GM12878 (cell line): ENCODE measurements at regions of chr11 and their contacts with region 1.

Region 1: DNA sequence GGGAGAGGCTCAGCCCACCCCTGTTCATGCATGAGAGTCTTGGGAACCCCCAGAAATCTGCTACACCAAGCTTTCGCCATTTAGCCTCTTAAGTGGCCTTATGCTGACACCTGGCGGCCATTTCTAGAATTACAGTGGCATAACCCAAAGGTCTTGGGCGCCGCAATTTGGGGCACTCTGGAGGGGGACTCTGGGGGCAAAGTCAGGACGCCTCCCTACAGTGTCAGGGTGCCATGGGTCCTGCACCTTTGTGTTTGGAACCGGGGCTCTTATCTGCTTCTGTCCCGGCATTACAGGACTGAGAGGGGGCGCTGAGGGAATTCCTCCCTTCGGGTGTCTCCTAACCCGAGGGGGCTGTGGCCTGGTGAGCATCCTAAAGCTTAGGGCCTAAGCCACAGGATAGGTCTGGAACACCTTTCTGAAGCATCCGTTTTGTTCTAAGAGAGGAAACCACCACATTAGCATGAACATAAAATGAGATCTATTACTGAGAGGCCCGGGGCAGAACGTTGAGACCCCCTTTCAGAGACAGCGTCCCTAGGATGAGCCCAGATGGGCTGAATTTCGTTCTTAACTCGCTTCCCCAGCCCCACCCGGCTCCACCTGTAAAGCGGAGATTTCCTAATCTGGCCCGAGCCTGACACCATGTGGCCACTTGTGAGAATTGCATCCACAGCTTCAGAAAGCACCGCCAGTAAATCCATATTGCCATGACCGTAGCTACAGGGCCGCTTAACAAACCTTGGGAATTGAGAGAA is 9.3 kb downstream of the INS start:
- DNase-seq: no peak
- ATAC-seq: peak; percentile 77
- H3K4me3 ChIP-seq: no peak overlapping the region
- H3K27ac ChIP-seq: no peak overlapping the region
- H3K4me1 ChIP-seq: no peaks in the 10 kb centered on the region
- H3K27me3 ChIP-seq: no peaks in the 10 kb centered on the region; a peak in 1 of 4 replicates
- CTCF ChIP-seq: peak; percentile 73 to 82 (median 73)
- EP300 ChIP-seq: no peak
- POLR2A ChIP-seq: no peak
- RAD21 ChIP-seq: peak; percentile 80

Region 2: DNA sequence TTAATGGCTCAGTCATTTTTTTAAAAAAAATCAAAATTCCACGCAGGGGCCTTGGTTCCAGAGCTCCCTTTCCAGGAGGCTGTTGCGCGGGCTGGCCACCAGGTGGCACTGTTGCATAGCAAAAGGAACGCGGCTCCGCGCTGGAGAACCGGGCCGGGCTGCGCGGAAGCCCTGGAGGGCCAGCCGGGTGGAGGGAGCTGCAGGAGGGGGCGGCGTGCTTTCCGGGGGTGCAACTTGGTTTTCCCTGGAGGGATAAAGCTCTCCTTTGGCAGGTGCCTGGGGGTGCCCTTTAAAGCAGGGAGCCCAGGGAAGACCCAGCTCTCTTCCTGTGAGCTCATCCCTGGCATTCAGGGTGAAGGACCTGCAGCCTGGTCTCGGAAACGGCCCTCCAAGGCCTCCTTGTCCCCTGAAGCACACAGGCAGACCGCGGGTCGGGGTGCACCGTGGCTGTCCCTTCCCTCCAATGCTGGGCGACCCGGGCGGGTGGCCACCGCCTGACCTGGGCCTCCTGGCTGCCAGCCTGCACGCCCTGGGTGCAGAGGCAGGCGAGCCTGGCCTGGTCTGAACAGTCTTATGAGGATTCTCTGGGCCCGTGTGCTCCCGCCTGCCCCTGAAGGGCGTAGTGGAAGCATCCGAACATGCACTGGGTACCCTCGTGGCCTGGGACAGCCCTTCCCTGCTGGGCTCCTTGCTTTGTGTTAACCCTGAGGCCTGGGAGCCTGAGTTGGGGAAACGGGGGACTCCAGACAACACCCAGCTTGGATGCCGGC is 498.7 kb before region 1 on chr11:
- CTCF ChIA-PET with region 1: interaction called, 20 read pairs
- POLR2A ChIA-PET with region 1: no interaction called
- RAD21 ChIA-PET with region 1: interaction called, 11 read pairs
- SMC1A ChIA-PET with region 1: interaction called, 9 read pairs
- in situ Hi-C with region 1: no loop called
- intact Hi-C with region 1: loop called (anchors 1 kb)
- DNase-seq: no peak
- ATAC-seq: peak; percentile 97
- H3K4me3 ChIP-seq: no peak overlapping the region
- H3K27ac ChIP-seq: no peak overlapping the region
- H3K4me1 ChIP-seq: no peaks in the 10 kb centered on the region
- H3K27me3 ChIP-seq: peaks cover 0 to 3% of the 10 kb centered on the region in 2 experiments; a peak in 2 of 4 replicates
- CTCF ChIP-seq: peak; percentile 90 to 94 (median 91)
- EP300 ChIP-seq: no peak
- POLR2A ChIP-seq: no peak
- RAD21 ChIP-seq: peak; percentile 83

Region 3: DNA sequence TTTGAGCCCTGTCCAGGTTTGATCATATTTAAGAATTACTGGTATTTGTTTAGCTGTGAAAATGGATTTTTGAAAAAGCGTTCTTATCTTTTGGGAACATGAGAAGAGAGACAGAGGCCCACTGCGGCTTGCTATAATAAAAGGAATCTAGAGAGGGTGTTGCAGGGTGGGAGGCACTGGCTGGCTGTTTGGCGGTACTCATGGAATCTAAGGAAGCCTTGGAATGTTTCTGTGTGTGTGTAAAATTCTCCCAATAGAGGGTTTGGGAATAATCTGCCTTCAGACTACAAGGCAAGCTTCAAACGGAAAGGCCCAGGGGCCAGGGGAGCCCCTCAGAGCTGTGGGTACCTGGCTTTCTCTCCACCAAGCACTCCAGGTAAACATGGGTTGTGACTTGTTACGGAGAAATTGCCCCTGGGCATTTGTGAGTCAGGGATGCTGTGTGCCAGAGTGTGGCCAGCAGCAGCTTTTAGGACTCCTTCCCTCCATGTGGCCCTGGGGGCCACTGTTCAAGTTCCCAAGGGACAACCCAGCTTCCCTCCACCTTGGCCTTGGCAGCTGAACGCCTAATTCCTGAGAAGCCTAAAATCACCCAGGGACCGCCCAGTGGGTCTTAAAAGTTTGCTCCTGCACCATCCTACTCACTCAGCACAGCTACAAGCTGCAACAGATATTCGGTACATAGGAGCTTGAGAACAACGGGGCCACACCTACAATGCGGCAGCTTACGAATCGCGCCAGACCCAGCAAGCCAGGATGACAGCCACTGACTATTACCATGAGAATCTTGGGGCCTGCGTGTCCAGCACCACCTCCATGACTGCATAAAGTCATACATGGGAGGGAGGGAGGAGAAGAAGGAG is 331.0 kb before region 1 on chr11:
- CTCF ChIA-PET with region 1: interaction called, 6 read pairs
- POLR2A ChIA-PET with region 1: no interaction called
- RAD21 ChIA-PET with region 1: no interaction called
- SMC1A ChIA-PET with region 1: no interaction called
- in situ Hi-C with region 1: loop called (anchors 5 kb)
- intact Hi-C with region 1: no loop called
- DNase-seq: no peak
- ATAC-seq: no peak
- H3K4me3 ChIP-seq: no peak overlapping the region
- H3K27ac ChIP-seq: no peak overlapping the region
- H3K4me1 ChIP-seq: no peaks in the 10 kb centered on the region
- H3K27me3 ChIP-seq: peaks cover 0 to 2% of the 10 kb centered on the region in 2 experiments; a peak in 2 of 4 replicates
- CTCF ChIP-seq: no peak
- EP300 ChIP-seq: no peak
- POLR2A ChIP-seq: no peak
- RAD21 ChIP-seq: no peak

Region 4: DNA sequence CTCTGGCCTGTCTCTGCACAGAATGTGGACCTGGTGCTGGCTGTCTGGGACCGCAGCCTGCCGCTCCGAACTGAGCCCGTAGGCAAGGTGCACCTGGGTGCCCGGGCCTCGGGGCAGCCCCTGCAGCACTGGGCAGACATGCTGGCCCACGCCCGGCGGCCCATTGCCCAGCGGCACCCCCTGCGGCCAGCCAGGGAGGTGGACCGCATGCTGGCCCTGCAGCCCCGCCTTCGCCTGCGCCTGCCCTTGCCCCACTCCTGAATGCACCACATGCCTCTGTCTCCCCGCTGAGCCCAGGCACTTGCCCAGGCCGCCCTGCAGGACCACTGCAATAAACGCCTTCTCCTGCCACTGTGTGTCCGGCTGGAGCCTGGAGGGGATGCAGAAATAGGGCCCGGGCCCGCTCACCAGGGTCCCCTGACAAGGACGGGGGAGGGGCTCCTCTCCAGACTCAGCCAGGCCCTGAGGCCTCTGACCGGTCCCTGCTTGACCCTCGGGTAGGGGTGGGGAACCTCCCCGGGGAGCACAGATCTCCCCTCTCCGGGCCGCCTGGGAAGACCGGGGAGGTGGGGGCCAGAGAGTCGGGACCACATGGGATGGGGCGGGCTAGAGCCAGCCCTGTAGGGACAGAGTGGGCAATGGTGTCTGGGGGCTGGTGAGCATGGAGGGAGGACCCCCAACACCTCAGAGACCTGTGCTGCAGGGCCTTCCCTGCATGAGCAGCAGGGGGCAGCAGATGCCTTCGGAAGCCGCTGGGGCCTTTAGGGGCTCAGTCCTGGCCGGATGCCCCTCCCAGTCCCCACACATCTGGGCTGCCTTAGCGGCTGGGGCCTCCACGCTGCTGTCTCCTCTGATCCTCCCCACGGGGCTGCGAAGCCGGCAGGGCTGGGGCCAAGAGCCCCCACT is 314.3 kb before region 1 on chr11:
- CTCF ChIA-PET with region 1: interaction called, 35 read pairs
- POLR2A ChIA-PET with region 1: no interaction called
- RAD21 ChIA-PET with region 1: interaction called, 7 read pairs
- SMC1A ChIA-PET with region 1: interaction called, 8 read pairs
- in situ Hi-C with region 1: no loop called
- intact Hi-C with region 1: loop called (anchors 1 kb)
- DNase-seq: no peak
- ATAC-seq: peak; percentile 89
- H3K4me3 ChIP-seq: no peak overlapping the region; the same call in 1 of the 2 replicates
- H3K27ac ChIP-seq: no peak overlapping the region
- H3K4me1 ChIP-seq: peaks cover 15% of the 10 kb centered on the region
- H3K27me3 ChIP-seq: no peaks in the 10 kb centered on the region; a peak in 1 of 4 replicates
- CTCF ChIP-seq: peak; percentile 91 to 96 (median 94)
- EP300 ChIP-seq: no peak
- POLR2A ChIP-seq: no peak
- RAD21 ChIP-seq: peak; percentile 96

Region 5: GRCh38 chr11:1872267-1872985 is 279.3 kb before region 1 on chr11:
- CTCF ChIA-PET with region 1: no interaction called
- POLR2A ChIA-PET with region 1: no interaction called
- RAD21 ChIA-PET with region 1: no interaction called
- SMC1A ChIA-PET with region 1: no interaction called
- in situ Hi-C with region 1: no loop called
- intact Hi-C with region 1: no loop called
- DNase-seq: no peak
- ATAC-seq: no peak
- H3K4me3 ChIP-seq: no peak overlapping the region
- H3K27ac ChIP-seq: no peak overlapping the region
- H3K4me1 ChIP-seq: no peaks in the 10 kb centered on the region
- H3K27me3 ChIP-seq: no peaks in the 10 kb centered on the region
- CTCF ChIP-seq: no peak
- EP300 ChIP-seq: no peak
- POLR2A ChIP-seq: no peak
- RAD21 ChIP-seq: no peak

Region 6: GRCh38 chr11:1882519-1883238 is 269.0 kb before region 1 on chr11:
- CTCF ChIA-PET with region 1: interaction called, 8 read pairs
- POLR2A ChIA-PET with region 1: no interaction called
- RAD21 ChIA-PET with region 1: interaction called, 9 read pairs
- SMC1A ChIA-PET with region 1: no interaction called
- in situ Hi-C with region 1: no loop called
- intact Hi-C with region 1: loop called (anchors 2 kb)
- DNase-seq: no peak
- ATAC-seq: peak; percentile 96
- H3K4me3 ChIP-seq: no peak overlapping the region
- H3K27ac ChIP-seq: no peak overlapping the region
- H3K4me1 ChIP-seq: no peaks in the 10 kb centered on the region; the same call in 1 of the 2 replicates
- H3K27me3 ChIP-seq: no peaks in the 10 kb centered on the region
- CTCF ChIP-seq: peak; percentile 84 to 93 (median 92)
- EP300 ChIP-seq: no peak
- POLR2A ChIP-seq: peak; percentile 45; the same call in 1 of the 2 replicates
- RAD21 ChIP-seq: peak; percentile 68

Region 7: DNA sequence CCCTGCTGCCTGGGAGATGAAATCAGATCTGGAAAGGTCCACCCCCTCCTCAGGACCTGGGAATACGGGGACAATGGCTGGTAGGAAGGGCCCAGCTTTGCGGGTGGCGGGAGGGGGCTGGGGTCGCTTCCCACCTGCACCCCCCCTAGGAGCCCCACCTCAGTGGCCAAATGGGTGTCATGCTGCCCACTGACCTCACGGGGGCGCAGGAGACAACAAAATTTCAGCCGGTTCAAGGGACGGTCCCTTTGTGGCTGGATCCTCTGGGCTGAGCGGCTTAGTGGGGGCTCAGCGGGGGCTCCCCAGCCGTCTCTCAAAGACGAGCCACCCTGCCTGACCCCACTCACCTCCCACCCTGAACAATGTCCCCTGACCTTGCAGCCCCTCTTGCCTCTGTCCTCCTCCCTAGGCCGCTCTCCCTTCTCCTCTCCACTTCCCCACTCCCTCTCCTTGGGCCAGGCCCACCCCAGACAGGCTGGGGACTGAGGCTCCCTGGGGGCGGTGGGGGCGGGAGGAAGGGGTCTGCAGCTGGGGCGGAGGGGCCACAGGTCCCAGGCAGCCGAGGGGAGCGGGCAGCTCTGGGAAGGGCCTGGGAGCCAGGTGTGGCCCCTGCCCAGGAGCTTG is 114.7 kb before region 1 on chr11:
- CTCF ChIA-PET with region 1: interaction called, 180 read pairs
- POLR2A ChIA-PET with region 1: no interaction called
- RAD21 ChIA-PET with region 1: interaction called, 101 read pairs
- SMC1A ChIA-PET with region 1: interaction called, 46 read pairs
- in situ Hi-C with region 1: no loop called
- intact Hi-C with region 1: no loop called
- DNase-seq: no peak
- ATAC-seq: peak; percentile 80
- H3K4me3 ChIP-seq: no peak overlapping the region
- H3K27ac ChIP-seq: no peak overlapping the region
- H3K4me1 ChIP-seq: no peaks in the 10 kb centered on the region
- H3K27me3 ChIP-seq: no peaks in the 10 kb centered on the region
- CTCF ChIP-seq: no peak
- EP300 ChIP-seq: no peak
- POLR2A ChIP-seq: no peak
- RAD21 ChIP-seq: no peak

Region 8: GRCh38 chr11:2240834-2241233 is 89.2 kb after region 1 on chr11:
- CTCF ChIA-PET with region 1: no interaction called
- POLR2A ChIA-PET with region 1: no interaction called
- RAD21 ChIA-PET with region 1: no interaction called
- SMC1A ChIA-PET with region 1: no interaction called
- in situ Hi-C with region 1: no loop called
- intact Hi-C with region 1: no loop called
- DNase-seq: no peak
- ATAC-seq: no peak
- H3K4me3 ChIP-seq: no peak overlapping the region
- H3K27ac ChIP-seq: no peak overlapping the region
- H3K4me1 ChIP-seq: no peaks in the 10 kb centered on the region
- H3K27me3 ChIP-seq: no peaks in the 10 kb centered on the region; a peak in 1 of 4 replicates
- CTCF ChIP-seq: no peak
- EP300 ChIP-seq: no peak
- POLR2A ChIP-seq: no peak
- RAD21 ChIP-seq: no peak

Region 9: DNA sequence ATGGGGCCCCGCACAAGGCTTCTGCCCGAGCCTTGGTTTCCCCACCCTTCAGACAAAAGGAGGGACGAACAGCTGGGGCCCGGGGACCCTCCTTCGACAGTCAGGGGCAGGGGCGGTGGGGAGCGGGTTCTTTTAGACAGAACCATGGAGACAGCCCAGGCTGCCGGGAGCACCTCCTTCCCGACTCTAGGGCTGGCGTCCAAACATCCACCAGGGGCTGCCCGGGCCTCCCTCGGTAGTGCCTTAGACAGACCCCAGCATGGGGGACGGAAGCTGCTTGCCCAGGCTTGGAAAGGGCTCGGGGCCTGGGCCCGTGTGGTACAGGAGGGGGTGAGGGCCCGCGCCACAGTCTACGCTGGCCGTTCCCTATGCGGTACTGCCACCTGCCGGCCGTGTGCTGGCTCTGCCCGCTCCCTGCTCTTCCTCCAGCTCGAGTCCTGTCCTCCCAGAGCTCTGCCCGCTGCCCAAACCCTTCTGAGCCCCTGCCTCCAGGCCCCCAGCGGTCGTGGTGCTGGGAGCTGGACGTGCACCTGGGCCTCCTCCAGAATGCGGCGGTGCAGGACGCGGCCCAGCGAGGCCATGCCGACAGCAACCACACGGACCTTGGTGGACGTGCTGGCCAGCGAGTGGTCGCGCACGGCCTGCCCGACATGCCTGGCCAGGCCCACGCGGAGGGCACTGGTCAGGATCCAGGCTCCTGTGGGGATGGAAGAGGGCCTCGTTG is 269.0 kb after region 1 on chr11:
- CTCF ChIA-PET with region 1: interaction called, 10 read pairs
- POLR2A ChIA-PET with region 1: no interaction called
- RAD21 ChIA-PET with region 1: no interaction called
- SMC1A ChIA-PET with region 1: no interaction called
- in situ Hi-C with region 1: no loop called
- intact Hi-C with region 1: no loop called
- DNase-seq: no peak
- ATAC-seq: peak; percentile 98
- H3K4me3 ChIP-seq: no peak overlapping the region
- H3K27ac ChIP-seq: no peak overlapping the region
- H3K4me1 ChIP-seq: no peaks in the 10 kb centered on the region
- H3K27me3 ChIP-seq: no peaks in the 10 kb centered on the region
- CTCF ChIP-seq: peak; percentile 75 to 94 (median 93)
- EP300 ChIP-seq: no peak
- POLR2A ChIP-seq: no peak
- RAD21 ChIP-seq: peak; percentile 85